PC-9 (cell line): ENCODE measurements at regions of chr10 and their contacts with region 1.

Region 1: GRCh38 chr10:18214691-18215563 is 74.7 kb downstream of the CACNB2 start:
- DNase-seq: peak in 1 of 2 experiments; percentile 45
- H3K4me3 ChIP-seq: no peak overlapping the region
- H3K27ac ChIP-seq: no peak overlapping the region
- H3K4me1 ChIP-seq: no peaks in the 10 kb centered on the region
- H3K27me3 ChIP-seq: no peaks in the 10 kb centered on the region
- CTCF ChIP-seq: peak; percentile 72

Region 2: GRCh38 chr10:17290226-17290625 is 924.7 kb before region 1 on chr10:
- CTCF ChIA-PET with region 1: no interaction called
- POLR2A ChIA-PET with region 1: no interaction called
- intact Hi-C with region 1: loop called (anchors 10 kb)
- DNase-seq: peak; percentile 10 to 37
- H3K4me3 ChIP-seq: no peak overlapping the region
- H3K27ac ChIP-seq: no peak overlapping the region
- H3K4me1 ChIP-seq: no peaks in the 10 kb centered on the region
- H3K27me3 ChIP-seq: no peaks in the 10 kb centered on the region
- CTCF ChIP-seq: peak; percentile 66

Region 3: DNA sequence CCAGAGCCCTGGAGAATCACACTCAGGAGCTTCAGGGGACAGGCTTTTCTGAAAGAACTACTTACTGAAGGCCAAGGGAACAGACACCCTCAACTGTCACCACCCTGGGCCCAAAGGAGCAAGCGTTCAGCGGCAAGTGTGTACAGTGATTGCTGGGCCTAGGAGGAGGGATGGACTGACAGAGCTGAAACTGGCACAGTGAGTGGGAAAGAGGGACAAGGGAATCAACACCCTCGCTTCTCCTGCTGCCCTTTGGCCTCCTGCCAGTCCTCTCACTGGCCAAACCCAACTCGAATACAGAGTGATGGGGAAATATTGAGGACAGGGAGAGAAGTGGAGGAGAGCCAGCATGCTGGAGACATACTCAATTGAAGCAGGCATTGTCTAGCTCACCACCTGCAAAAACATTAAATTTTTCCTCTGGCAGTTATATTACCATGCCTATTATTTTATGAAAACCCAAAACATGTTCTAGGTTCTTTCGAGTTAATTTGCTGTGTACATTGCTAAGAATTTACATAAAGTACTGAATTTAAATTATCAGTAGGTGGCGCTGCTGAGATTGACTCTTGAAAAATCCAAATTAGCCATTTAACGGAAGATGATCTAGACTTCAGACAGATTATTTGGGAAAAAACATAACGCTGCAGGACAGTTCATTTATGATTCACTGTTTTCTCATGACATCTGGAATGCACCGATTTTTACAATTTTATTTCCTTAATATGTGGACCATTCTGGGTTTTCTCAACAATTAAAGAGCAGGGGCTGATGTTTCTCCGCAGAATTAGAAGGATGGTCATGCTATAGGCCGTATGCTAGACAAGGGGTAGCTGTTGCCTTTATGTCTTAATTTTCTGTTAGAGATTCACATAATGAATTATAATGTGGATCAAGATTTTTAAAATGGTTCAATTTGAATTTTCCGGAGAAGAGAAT is 477.6 kb before region 1 on chr10:
- CTCF ChIA-PET with region 1: interaction called, 3 read pairs
- POLR2A ChIA-PET with region 1: no interaction called
- intact Hi-C with region 1: loop called (anchors 2 kb)
- DNase-seq: no peak
- H3K4me3 ChIP-seq: no peak overlapping the region
- H3K27ac ChIP-seq: no peak overlapping the region
- H3K4me1 ChIP-seq: no peaks in the 10 kb centered on the region
- H3K27me3 ChIP-seq: no peaks in the 10 kb centered on the region
- CTCF ChIP-seq: peak; percentile 65

Region 4: DNA sequence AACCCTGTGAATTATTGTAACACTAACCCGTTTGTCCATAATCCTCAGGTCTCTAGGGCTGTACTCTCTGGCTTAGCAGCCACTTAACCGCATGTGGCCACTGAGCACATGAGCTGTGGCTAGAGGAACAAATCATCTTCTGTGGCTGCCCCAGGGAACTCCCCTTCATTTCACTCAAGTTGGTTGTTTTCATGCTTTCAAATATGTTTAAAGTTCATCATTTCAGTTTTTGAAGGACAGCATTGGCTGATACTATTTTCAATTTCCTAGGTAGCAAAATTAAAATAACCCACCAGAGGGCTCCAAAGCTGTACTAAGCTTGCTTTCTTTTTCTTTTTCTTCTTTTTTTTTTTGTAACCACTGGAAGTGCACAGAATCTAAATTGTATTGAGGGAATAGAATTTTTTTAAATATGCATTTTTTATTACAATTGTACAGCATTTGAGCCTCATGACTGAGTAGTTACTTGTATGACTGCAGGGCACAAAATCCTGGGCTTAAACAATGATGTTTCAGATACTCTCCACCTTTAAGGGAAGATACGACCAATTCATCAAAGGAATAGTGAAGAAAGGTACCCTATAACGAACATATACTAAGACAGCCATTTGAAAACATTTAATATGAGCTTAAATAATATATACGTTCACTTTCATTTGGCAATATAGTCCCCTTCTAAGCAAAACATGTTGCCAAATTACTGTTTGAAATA is 367.2 kb before region 1 on chr10:
- CTCF ChIA-PET with region 1: interaction called, 14 read pairs
- POLR2A ChIA-PET with region 1: no interaction called
- intact Hi-C with region 1: loop called (anchors 1 kb)
- DNase-seq: no peak
- H3K4me3 ChIP-seq: no peak overlapping the region
- H3K27ac ChIP-seq: no peak overlapping the region
- H3K4me1 ChIP-seq: no peaks in the 10 kb centered on the region
- H3K27me3 ChIP-seq: no peaks in the 10 kb centered on the region
- CTCF ChIP-seq: peak; percentile 61

Region 5: DNA sequence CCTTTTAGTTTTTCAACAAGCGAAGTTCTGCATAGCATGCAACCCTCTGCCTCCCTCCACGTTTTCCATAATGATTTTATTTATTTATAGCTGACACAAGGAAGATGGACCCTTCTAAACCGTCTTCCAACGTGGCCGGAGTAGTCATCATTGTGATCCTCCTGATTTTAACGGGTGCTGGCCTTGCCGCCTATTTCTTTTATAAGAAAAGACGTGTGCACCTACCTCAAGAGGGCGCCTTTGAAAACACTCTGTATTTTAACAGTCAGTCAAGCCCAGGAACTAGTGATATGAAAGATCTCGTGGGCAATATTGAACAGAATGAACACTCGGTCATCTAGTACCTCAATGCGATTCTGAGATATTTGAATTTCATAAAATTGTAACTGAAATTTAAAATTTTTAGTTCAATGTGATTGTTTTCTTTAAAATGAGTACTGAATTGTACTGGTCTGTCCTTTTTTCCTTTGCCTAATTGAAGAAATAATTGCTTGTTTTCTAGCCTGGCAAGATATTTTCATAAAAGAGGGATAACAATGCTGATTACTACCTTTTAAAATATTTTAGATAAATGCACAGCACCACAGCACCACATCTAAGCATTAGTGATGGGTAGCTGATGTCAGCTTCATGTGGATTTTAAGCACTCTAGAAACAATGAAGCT is 304.7 kb before region 1 on chr10:
- CTCF ChIA-PET with region 1: no interaction called
- POLR2A ChIA-PET with region 1: no interaction called
- intact Hi-C with region 1: loop called (anchors 5 kb)
- DNase-seq: peak in 1 of 2 experiments; percentile 23
- H3K4me3 ChIP-seq: no peak overlapping the region
- H3K27ac ChIP-seq: no peak overlapping the region
- H3K4me1 ChIP-seq: no peaks in the 10 kb centered on the region
- H3K27me3 ChIP-seq: no peaks in the 10 kb centered on the region
- CTCF ChIP-seq: peak; percentile 59

Region 6: GRCh38 chr10:18140149-18140956 is 74.6 kb before region 1 on chr10 and contains the start of gene CACNB2:
- CTCF ChIA-PET with region 1: no interaction called
- POLR2A ChIA-PET with region 1: no interaction called
- intact Hi-C with region 1: no loop called
- DNase-seq: peak in 1 of 2 experiments; percentile 27
- H3K4me3 ChIP-seq: peak within 1 kb of the TSS; percentile 14; the same call in 1 of the 2 replicates
- H3K27ac ChIP-seq: no peak within 1 kb of the TSS
- H3K4me1 ChIP-seq: no peaks in the 10 kb centered on the region
- H3K27me3 ChIP-seq: no peaks in the 10 kb centered on the region; the same call in 1 of the 2 replicates
- CTCF ChIP-seq: no peak
- total RNA-seq, gene CACNB2: not detected in 2 replicates

Region 7: GRCh38 chr10:18229826-18230225 is 14.9 kb after region 1 on chr10:
- CTCF ChIA-PET with region 1: no interaction called
- POLR2A ChIA-PET with region 1: no interaction called
- intact Hi-C with region 1: no loop called
- DNase-seq: no peak
- H3K4me3 ChIP-seq: no peak overlapping the region
- H3K27ac ChIP-seq: no peak overlapping the region
- H3K4me1 ChIP-seq: no peaks in the 10 kb centered on the region
- H3K27me3 ChIP-seq: no peaks in the 10 kb centered on the region
- CTCF ChIP-seq: no peak